Activated naive CD8-positive, alpha-beta T cell treated with anti-CD3 and anti-CD28 coated beads, Interleukin-2, amount 10 ng/mL, durations not matched to agents 7 days and 5 days (primary cell): ENCODE measurements at regions of chr3 and their contacts with region 1.

Region 1: GRCh38 chr3:160399125-160400029 is at the starts of genes IFT80 and SMC4:
- DNase-seq: peak; percentile 93
- ATAC-seq: peak; percentile 89
- H3K4me3 Mint-ChIP-seq: peak within 1 kb of the TSS; percentile 92
- H3K27ac Mint-ChIP-seq: peak within 1 kb of the TSS; percentile 93
- H3K4me1 Mint-ChIP-seq: peaks cover 40% of the 10 kb centered on the region
- H3K27me3 Mint-ChIP-seq: no peaks in the 10 kb centered on the region
- total RNA-seq, gene IFT80: 27.9 to 29.2 TPM
- total RNA-seq, gene SMC4: 187 to 189 TPM

Region 2: DNA sequence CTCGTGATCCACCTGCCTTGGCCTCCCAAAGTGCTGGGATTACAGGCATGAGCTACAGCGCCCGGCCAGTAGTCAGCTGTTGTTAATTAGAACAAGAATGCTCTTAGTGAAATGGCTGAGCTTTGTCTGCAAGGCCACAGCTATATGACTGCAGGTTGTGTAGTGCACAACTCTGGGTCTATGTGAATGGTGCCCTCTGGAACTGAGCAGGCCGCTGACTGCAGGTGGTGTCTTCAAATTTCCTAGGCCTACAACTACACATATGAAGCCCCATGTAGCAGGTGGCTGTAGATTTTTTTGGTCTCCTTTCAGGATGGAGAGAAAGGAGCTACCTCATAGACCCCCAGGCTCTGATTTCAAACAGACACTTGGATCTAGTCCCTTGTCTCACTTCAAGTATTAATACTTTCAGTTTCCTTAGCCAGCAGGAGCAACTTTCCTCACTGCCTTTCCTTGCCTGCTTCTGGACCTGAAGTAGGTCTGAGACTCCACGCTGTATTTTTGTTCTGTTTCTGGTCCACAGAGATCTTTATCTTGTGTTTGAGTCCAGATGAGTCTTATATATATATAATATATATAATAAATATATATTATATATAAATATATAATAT is 87.3 kb before region 1 on chr3:
- POLR2A ChIA-PET with region 1: no interaction called
- DNase-seq: no peak
- ATAC-seq: peak; percentile 61
- H3K4me3 Mint-ChIP-seq: no peak overlapping the region
- H3K27ac Mint-ChIP-seq: no peak overlapping the region
- H3K4me1 Mint-ChIP-seq: no peaks in the 10 kb centered on the region
- H3K27me3 Mint-ChIP-seq: no peaks in the 10 kb centered on the region

Region 3: DNA sequence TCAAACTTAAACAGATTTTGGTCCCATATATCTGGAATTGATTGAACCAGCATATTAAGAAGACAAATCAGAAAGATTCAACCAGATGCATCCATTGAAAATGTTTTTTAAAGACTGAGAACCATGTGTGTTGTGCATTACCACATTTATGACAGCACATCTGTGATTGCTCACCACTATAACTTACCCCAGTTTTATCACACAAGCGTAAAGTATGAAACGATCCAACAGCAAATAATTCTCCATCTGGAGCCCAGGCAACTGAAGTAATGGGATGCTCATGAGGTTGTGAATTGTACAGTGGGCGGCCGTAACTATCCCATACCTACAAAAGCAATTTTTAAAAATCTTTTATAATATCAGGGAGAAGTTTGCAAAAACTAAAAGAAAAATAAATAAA is 43.6 kb before region 1 on chr3:
- POLR2A ChIA-PET with region 1: no interaction called
- DNase-seq: no peak
- ATAC-seq: no peak
- H3K4me3 Mint-ChIP-seq: no peak overlapping the region
- H3K27ac Mint-ChIP-seq: no peak overlapping the region
- H3K4me1 Mint-ChIP-seq: no peaks in the 10 kb centered on the region
- H3K27me3 Mint-ChIP-seq: no peaks in the 10 kb centered on the region

Region 4: DNA sequence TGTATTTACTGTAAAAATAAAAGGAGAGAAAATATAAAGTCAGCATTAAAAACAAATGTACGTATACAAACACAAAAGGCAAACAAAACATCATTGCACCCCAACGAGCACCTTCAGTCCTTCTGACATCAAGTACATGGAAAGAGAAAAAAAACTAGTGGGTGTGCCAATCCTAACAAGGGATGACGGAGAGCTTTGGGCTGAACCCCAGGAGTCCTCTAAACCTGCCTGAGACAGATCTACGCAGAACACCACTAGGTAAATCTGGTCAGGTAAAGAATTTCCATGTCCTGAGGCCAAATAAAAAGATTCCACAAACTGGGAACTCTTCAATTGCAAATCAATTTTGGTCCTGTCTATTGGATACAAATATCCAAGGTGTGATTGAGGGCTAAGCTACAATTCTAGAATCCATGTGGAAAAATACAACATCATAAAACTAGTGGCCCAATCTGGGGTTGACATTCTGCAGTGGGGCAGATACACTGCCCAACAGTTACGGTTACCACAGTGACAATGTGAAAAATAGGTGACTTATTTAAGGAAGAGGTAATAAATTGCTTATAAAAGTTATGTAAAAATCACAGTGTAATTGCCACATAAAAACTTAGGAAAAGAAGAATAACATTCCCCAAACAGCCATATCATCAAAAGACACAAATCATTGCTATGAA is 14.6 kb before region 1 on chr3:
- POLR2A ChIA-PET with region 1: no interaction called
- DNase-seq: no peak
- ATAC-seq: no peak
- H3K4me3 Mint-ChIP-seq: no peak overlapping the region
- H3K27ac Mint-ChIP-seq: no peak overlapping the region
- H3K4me1 Mint-ChIP-seq: peaks cover 2% of the 10 kb centered on the region
- H3K27me3 Mint-ChIP-seq: no peaks in the 10 kb centered on the region

Region 5: GRCh38 chr3:160413613-160414248 is 14.4 kb after region 1 on chr3:
- POLR2A ChIA-PET with region 1: interaction called, 14 read pairs
- DNase-seq: peak; percentile 46
- ATAC-seq: peak; percentile 73
- H3K4me3 Mint-ChIP-seq: no peak overlapping the region
- H3K27ac Mint-ChIP-seq: no peak overlapping the region
- H3K4me1 Mint-ChIP-seq: peaks cover 18% of the 10 kb centered on the region
- H3K27me3 Mint-ChIP-seq: no peaks in the 10 kb centered on the region

Region 6: DNA sequence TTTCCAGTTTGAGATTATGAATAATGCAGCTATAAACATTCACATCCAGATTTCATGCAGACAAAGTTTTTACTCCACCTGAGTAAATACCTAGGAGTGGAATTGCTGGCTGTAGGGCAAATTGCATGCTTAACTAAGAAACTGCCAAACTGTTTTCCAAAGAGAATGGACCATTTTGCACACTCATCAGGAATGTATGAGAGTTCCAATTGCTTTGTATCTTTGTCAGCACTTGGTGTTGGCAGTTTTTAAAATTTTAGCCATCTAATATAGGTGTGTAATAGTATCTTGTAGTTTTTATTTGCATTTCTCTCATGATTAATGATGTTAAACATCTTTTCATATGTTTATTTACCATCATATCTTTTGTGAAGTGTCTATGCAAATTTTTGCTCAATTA is 90.8 kb after region 1 on chr3:
- POLR2A ChIA-PET with region 1: no interaction called
- DNase-seq: no peak
- ATAC-seq: no peak
- H3K4me3 Mint-ChIP-seq: no peak overlapping the region
- H3K27ac Mint-ChIP-seq: no peak overlapping the region
- H3K4me1 Mint-ChIP-seq: peaks cover 3% of the 10 kb centered on the region
- H3K27me3 Mint-ChIP-seq: no peaks in the 10 kb centered on the region